PC-9 (cell line): ENCODE measurements at regions of chr6 and their contacts with region 1.

Region 1: GRCh38 chr6:14117158-14118090 is at the start of gene CD83:
- DNase-seq: peak; percentile 42 to 69
- H3K4me3 ChIP-seq: peak within 1 kb of the TSS; percentile 70
- H3K27ac ChIP-seq: no peak within 1 kb of the TSS
- H3K4me1 ChIP-seq: peaks cover 3% of the 10 kb centered on the region
- H3K27me3 ChIP-seq: no peaks in the 10 kb centered on the region
- CTCF ChIP-seq: no peak
- total RNA-seq, gene CD83: 3.2 and 3.6 TPM in 2 replicates

Region 2: GRCh38 chr6:14000901-14001300 is 116.5 kb before region 1 on chr6:
- CTCF ChIA-PET with region 1: interaction called, 11 read pairs
- POLR2A ChIA-PET with region 1: no interaction called
- intact Hi-C with region 1: no loop called
- DNase-seq: no peak
- H3K4me3 ChIP-seq: peak overlapping the region; percentile 17; the same call in 1 of the 2 replicates
- H3K27ac ChIP-seq: peak overlapping the region; percentile 66
- H3K4me1 ChIP-seq: peaks cover 23% of the 10 kb centered on the region
- H3K27me3 ChIP-seq: no peaks in the 10 kb centered on the region
- CTCF ChIP-seq: no peak

Region 3: DNA sequence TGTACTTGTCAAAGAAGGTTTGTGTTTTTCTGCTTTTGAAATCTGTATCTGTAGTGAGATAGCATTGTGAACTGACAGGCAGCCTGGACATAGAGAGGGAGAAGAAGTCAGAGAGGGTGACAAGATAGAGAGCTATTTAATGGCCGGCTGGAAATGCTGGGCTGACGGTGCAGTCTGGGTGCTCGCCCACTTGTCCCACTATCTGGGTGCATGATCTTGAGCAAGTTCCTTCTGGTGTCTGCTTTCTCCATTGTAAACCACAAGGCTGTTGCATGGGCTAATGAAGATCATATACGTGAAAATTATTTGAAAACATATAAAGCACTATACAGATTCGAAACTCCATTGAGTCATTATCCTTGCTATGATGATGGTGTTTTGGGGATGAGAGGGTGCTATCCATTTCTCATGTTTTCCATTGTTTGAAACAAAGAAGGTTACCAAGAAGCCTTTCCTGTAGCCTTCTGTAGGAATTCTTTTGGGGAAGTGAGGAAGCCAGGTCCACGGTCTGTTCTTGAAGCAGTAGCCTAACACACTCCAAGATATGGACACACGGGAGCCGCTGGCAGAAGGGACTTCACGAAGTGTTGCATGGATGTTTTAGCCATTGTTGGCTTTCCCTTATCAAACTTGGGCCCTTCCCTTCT is 18.6 kb after region 1 on chr6:
- CTCF ChIA-PET with region 1: no interaction called
- POLR2A ChIA-PET with region 1: no interaction called
- intact Hi-C with region 1: no loop called
- DNase-seq: no peak
- H3K4me3 ChIP-seq: no peak overlapping the region
- H3K27ac ChIP-seq: no peak overlapping the region
- H3K4me1 ChIP-seq: no peaks in the 10 kb centered on the region
- H3K27me3 ChIP-seq: no peaks in the 10 kb centered on the region
- CTCF ChIP-seq: no peak

Region 4: GRCh38 chr6:14165091-14165490 is 47.7 kb after region 1 on chr6:
- CTCF ChIA-PET with region 1: interaction called, 13 read pairs
- POLR2A ChIA-PET with region 1: no interaction called
- intact Hi-C with region 1: no loop called
- DNase-seq: no peak
- H3K4me3 ChIP-seq: no peak overlapping the region
- H3K27ac ChIP-seq: no peak overlapping the region
- H3K4me1 ChIP-seq: no peaks in the 10 kb centered on the region
- H3K27me3 ChIP-seq: no peaks in the 10 kb centered on the region
- CTCF ChIP-seq: no peak